ENCODE measurements at regions of chr10 and their contacts with region 1.

Region 1: GRCh38 chr10:23314835-23315239 is 29.8 kb downstream of the C10orf67 start:
- DNase-seq: peak in 2 of 10 donors; percentile 21 to 38

Region 2: GRCh38 chr10:23438550-23439441 is 124.0 kb after region 1 on chr10 and contains the start of gene OTUD1:
- intact Hi-C with region 1: no loop called
- DNase-seq: peak; percentile 92 to 99 (median 95)

Region 3: DNA sequence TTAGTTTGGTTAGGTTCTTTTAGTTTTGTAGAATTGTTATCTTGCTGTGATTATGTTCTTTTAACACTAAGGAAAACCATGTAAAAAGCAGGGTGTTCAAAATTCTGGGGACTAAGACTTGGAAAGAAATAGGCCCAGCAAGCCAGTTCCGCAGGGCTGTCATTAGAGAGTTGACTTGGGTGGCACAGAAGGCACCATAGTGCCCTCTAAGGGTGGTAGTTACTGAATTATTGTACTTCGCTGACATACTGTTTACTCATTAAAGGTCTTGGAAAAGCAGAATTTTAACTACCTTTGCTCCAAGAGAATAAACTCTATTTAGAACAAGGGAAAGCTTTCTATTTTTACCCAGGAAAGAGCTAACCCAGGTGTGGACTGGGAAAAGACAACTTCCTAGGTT is 210.6 kb after region 1 on chr10:
- intact Hi-C with region 1: loop called (anchors 1 kb)
- DNase-seq: peak in 2 of 10 donors; percentile 8 to 52

Region 4: DNA sequence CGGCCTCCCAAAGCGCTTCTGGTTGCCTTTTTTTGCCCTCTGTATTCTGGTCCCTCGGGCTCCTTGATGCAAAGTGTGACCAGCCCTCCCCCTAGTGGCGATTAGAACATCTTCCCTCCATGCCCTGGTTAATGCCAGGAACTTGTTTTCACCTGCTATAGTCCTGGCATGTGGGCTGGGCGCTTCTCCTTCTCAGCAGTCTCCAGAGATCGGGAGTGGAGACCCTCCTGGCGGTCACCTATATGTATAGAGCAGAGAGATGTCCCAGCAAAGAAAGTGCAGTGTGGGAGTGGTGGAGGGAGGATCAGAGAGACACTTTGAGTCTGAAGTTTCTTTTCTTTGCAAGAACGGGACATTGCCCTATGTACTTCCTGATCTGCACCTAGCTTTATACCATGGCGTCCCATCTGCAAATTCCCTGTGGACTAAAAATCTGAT is 388.2 kb after region 1 on chr10:
- intact Hi-C with region 1: loop called (anchors 10 kb)
- DNase-seq: peak in 7 of 10 donors; percentile 21 to 85 (median 43)